Activated CD8-positive, alpha-beta T cell treated with anti-CD3 and anti-CD28 coated beads for 36 hours (primary cell): ENCODE measurements at regions of chr22 and their contacts with region 1.

Region 1: DNA sequence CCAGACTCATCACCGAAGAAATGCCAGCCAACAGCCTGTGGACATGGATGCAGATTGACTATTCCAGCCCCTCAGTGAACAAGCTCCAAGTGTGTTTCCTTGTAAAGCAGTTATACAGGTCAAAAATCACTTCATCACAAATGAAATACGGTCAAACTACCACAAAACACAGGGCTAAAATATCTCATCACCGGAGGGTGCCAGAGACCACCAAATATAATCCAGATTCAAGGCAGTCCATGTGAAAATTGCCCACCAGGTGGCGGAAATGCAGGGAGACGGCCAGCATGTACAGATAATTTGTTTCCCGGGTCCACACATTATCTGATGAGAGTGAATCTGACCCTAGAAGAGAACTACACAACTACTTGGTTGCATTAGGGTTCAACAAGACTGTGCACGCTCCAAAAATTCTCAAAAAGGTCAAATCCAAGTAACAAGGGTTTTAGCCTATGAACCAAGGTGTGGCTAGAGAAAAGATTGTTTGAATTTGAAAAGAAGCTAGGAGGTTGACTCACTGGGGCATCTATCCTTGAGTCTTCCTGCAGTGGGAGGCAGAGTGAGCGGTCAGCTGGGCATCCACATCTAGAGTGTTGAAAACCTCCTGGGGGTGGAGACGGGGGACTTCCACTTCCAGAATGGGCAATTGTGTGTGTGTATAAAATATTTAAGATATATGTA is 71.7 kb downstream of the IGLL5 start:
- DNase-seq: peak; percentile 90
- ATAC-seq: peak; percentile 75
- H3K4me3 Mint-ChIP-seq: no peak overlapping the region
- H3K27ac Mint-ChIP-seq: no peak overlapping the region
- H3K4me1 Mint-ChIP-seq: no peaks in the 10 kb centered on the region
- H3K27me3 Mint-ChIP-seq: peaks cover 12% of the 10 kb centered on the region
- CTCF ChIP-seq: peak; percentile 96

Region 2: DNA sequence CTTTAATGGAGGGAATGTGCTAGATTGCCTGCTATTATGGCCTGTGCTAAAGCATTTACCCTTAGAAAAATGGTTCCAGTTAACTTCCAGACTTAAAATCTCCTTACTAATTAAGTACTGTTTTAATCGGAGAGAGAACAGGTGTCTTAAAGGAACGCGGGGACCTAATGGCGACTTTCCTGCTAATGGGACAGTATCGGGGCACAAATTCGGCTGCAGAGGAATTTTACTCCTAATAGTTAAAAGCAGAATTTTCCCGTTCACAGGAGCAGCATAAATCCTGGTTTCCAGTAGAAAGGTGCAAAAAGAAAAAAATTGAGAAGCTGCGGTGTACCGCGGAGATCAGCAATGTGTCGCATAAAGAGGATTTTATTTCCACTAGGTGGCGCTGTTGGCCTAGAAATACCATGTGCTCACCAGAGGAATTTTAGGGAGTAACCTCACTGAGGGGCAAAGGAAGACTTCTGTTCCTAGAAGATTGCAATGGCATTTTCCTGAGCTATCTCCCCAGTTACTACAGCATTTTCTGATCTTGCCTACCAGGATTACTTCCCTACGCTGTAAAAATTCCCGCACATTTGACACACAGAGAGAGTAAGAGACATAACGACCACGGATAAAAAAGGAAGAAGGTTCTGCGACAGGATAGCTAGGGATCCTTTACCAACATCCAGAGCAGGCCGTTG is 495.3 kb before region 1 on chr22:
- CTCF ChIA-PET with region 1: interaction called, 3 read pairs
- POLR2A ChIA-PET with region 1: no interaction called
- intact Hi-C with region 1: loop called (anchors 10 kb)
- DNase-seq: peak; percentile 67
- ATAC-seq: no peak
- H3K4me3 Mint-ChIP-seq: no peak overlapping the region
- H3K27ac Mint-ChIP-seq: no peak overlapping the region
- H3K4me1 Mint-ChIP-seq: no peaks in the 10 kb centered on the region
- H3K27me3 Mint-ChIP-seq: peaks cover 37% of the 10 kb centered on the region
- CTCF ChIP-seq: peak; percentile 92

Region 3: GRCh38 chr22:22787786-22788459 is 171.4 kb before region 1 on chr22:
- CTCF ChIA-PET with region 1: interaction called, 72 read pairs
- POLR2A ChIA-PET with region 1: no interaction called
- intact Hi-C with region 1: no loop called
- DNase-seq: peak; percentile 81
- ATAC-seq: peak; percentile 84
- H3K4me3 Mint-ChIP-seq: no peak overlapping the region
- H3K27ac Mint-ChIP-seq: peak overlapping the region; percentile 46
- H3K4me1 Mint-ChIP-seq: peaks cover 34% of the 10 kb centered on the region
- H3K27me3 Mint-ChIP-seq: no peaks in the 10 kb centered on the region
- CTCF ChIP-seq: peak; percentile 89

Region 4: DNA sequence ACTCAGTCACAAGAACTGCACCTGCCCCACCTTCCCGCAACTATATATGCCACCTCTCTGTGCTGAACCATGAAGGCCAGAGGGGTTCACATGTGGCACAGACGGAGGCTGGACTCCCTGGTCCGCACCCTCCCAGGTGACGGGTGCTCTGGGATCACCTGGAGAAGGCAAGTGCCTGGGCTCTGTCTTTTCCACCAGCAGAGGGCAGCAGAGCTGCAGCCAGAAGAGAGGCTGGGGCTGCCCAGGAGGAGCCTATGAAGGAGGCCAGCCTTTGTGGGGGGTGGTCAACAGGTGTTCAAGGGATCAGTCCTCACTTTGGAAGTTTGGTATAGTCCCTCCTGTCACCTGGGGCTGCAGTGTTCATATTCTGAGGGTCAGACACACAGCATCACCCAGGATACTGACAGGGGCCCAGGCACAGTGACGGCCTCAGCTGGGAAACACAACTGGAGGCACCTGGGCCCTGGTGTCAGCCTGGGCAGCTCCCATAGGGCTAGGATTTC is 110.9 kb before region 1 on chr22:
- CTCF ChIA-PET with region 1: interaction called, 93 read pairs
- POLR2A ChIA-PET with region 1: no interaction called
- intact Hi-C with region 1: loop called (anchors 5 kb)
- DNase-seq: peak; percentile 82
- ATAC-seq: peak; percentile 93
- H3K4me3 Mint-ChIP-seq: no peak overlapping the region
- H3K27ac Mint-ChIP-seq: no peak overlapping the region
- H3K4me1 Mint-ChIP-seq: peaks cover 32% of the 10 kb centered on the region
- H3K27me3 Mint-ChIP-seq: no peaks in the 10 kb centered on the region
- CTCF ChIP-seq: peak; percentile 97

Region 5: DNA sequence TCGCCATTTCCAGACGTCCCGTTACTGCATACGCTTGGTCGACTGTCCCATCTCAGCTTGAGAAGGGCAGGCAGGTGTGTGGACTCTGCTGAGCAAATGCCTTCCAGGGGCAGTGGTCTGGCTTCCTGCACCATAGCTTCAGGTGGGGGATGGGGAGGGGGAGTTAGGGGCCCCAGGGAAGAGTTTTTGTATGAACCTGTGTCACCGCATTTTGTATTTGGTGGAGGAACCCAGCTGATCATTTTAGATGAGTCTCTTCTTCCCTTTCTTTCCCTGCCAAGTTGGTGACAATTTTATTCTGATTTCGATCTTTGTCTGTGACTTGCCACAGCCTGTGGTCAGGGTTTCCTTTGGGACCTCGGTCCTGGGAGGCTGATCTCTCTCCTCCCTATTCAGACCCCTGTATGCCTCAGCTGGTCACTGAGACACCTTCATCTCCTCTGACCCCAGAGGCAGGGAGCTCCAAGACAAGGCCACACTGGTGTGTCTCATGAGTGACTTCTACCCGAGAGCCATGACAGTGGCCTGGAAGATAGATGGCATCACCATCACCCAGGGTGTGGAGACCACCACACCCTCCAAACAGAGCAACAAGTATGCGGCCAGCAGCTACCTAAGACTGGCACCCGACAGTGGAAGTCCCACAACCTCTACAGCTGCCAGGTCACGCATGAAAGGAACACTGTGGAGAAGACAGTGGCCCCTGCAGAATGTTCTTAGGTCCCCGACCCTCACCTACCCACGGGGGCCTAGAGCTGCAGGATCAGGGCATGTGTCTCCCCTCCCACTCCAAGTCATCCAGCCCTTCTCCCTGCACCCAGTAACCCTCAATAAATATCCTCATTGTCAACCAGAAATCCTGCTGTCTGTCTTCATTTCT is 48.7 kb before region 1 on chr22:
- CTCF ChIA-PET with region 1: no interaction called
- POLR2A ChIA-PET with region 1: no interaction called
- intact Hi-C with region 1: no loop called
- DNase-seq: no peak
- ATAC-seq: no peak
- H3K4me3 Mint-ChIP-seq: no peak overlapping the region
- H3K27ac Mint-ChIP-seq: no peak overlapping the region
- H3K4me1 Mint-ChIP-seq: no peaks in the 10 kb centered on the region
- H3K27me3 Mint-ChIP-seq: no peaks in the 10 kb centered on the region
- CTCF ChIP-seq: no peak

Region 6: DNA sequence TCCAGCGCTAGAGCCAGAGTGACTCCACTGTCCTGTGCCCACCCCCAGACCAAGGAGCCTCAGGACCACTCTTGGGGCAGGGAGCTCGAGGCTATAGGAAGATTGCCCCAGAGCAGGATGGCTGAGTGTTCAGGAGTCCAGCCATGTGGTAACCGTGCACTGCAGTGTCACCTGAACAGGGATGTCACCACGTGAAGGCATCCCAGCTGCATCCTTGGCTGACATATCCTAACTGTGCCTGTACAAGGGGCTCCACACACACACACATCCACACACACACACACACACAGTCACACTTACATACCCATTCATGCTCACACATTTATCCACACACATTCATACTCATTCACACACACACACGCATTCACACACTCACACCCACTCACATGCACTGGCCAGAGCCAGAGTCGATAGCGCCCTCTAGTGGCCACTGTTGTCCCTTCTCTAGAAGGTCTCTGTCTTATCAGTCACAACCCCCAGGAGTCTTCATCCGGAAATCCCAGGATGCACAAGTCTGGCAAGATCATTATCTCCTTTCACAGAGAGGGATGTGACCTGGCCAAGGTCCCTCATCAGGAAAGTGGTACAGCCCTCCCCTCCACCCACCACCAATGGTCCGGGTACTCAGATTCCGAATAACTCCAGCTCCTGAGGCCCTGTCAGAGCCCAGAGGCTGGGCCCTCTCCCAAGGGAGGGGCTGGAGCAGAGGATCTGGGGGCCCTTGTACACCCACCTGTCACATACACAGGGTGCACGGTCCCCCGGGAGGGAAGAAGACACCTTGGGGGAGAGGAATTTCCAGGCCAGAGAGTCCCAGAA is 16.6 kb before region 1 on chr22:
- CTCF ChIA-PET with region 1: interaction called, 65 read pairs
- POLR2A ChIA-PET with region 1: no interaction called
- intact Hi-C with region 1: no loop called
- DNase-seq: peak; percentile 91
- ATAC-seq: peak; percentile 83
- H3K4me3 Mint-ChIP-seq: no peak overlapping the region
- H3K27ac Mint-ChIP-seq: no peak overlapping the region
- H3K4me1 Mint-ChIP-seq: peaks cover 6% of the 10 kb centered on the region
- H3K27me3 Mint-ChIP-seq: peaks cover 1% of the 10 kb centered on the region
- CTCF ChIP-seq: peak; percentile 91

Region 7: GRCh38 chr22:23069502-23070357 is 110.4 kb after region 1 on chr22:
- CTCF ChIA-PET with region 1: interaction called, 10 read pairs
- POLR2A ChIA-PET with region 1: no interaction called
- intact Hi-C with region 1: no loop called
- DNase-seq: peak; percentile 86
- ATAC-seq: peak; percentile 99
- H3K4me3 Mint-ChIP-seq: peak overlapping the region; percentile 70
- H3K27ac Mint-ChIP-seq: no peak overlapping the region
- H3K4me1 Mint-ChIP-seq: peaks cover 6% of the 10 kb centered on the region
- H3K27me3 Mint-ChIP-seq: peaks cover 17% of the 10 kb centered on the region
- CTCF ChIP-seq: no peak

Region 8: GRCh38 chr22:23079814-23080521 is 120.7 kb after region 1 on chr22:
- CTCF ChIA-PET with region 1: no interaction called
- POLR2A ChIA-PET with region 1: no interaction called
- intact Hi-C with region 1: no loop called
- DNase-seq: no peak
- ATAC-seq: no peak
- H3K4me3 Mint-ChIP-seq: no peak overlapping the region
- H3K27ac Mint-ChIP-seq: no peak overlapping the region
- H3K4me1 Mint-ChIP-seq: peaks cover 3% of the 10 kb centered on the region
- H3K27me3 Mint-ChIP-seq: no peaks in the 10 kb centered on the region
- CTCF ChIP-seq: no peak

Region 9: GRCh38 chr22:23144932-23145873 is 185.9 kb after region 1 on chr22 and contains the start of gene RAB36:
- CTCF ChIA-PET with region 1: interaction called, 14 read pairs
- POLR2A ChIA-PET with region 1: no interaction called
- intact Hi-C with region 1: no loop called
- DNase-seq: peak; percentile 90
- ATAC-seq: peak; percentile 49
- H3K4me3 Mint-ChIP-seq: peak within 1 kb of the TSS; percentile 61
- H3K27ac Mint-ChIP-seq: no peak within 1 kb of the TSS
- H3K4me1 Mint-ChIP-seq: peaks cover 43% of the 10 kb centered on the region
- H3K27me3 Mint-ChIP-seq: no peaks in the 10 kb centered on the region
- CTCF ChIP-seq: no peak
- total RNA-seq, gene RAB36: 0.20 to 0.22 TPM